Activated B cell treated with CpG ODN at 0.5 μM for 24 hours (primary cell): ENCODE measurements at regions of chr1 and their contacts with region 1.

Region 1: GRCh38 chr1:45583264-45583665 is 576 bp upstream of the NASP start:
- DNase-seq: peak; percentile 84
- ATAC-seq: peak; percentile 79
- H3K4me3 Mint-ChIP-seq: peak overlapping the region; percentile 98
- H3K27ac Mint-ChIP-seq: peak overlapping the region; percentile 96
- H3K4me1 Mint-ChIP-seq: peaks cover 46% of the 10 kb centered on the region
- H3K27me3 Mint-ChIP-seq: no peaks in the 10 kb centered on the region
- CTCF ChIP-seq: no peak

Region 2: GRCh38 chr1:45339789-45340570 is 243.3 kb before region 1 on chr1 and contains the starts of genes MUTYH and TOE1:
- CTCF ChIA-PET with region 1: no interaction called
- POLR2A ChIA-PET with region 1: interaction called, 30 read pairs
- intact Hi-C with region 1: no loop called
- DNase-seq: peak; percentile 85
- ATAC-seq: peak; percentile 86
- H3K4me3 Mint-ChIP-seq: peak within 1 kb of the TSS; percentile 100
- H3K27ac Mint-ChIP-seq: peak within 1 kb of the TSS; percentile 99
- H3K4me1 Mint-ChIP-seq: peaks cover 39% of the 10 kb centered on the region
- H3K27me3 Mint-ChIP-seq: no peaks in the 10 kb centered on the region
- CTCF ChIP-seq: no peak
- total RNA-seq, gene MUTYH: 61.0 and 63.0 TPM in 2 replicates
- total RNA-seq, gene TOE1: 24.6 and 25.3 TPM in 2 replicates

Region 3: DNA sequence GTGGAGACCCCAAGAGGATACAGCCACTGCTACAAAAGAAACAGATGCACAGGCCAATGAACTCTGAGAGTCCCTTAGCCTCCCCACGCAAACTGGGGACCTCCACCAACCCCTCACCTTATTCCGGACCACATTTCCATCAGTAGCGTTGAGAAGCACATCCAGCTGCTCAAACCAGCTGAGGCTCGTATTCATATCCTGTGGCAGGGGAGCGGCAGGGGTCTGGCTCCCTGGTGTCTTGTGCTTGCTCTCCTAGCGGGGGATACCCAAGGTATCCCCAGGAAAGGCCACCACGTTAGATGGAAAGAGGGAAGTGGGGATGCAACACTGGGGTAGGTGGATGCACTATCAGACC is 83.9 kb before region 1 on chr1:
- CTCF ChIA-PET with region 1: no interaction called
- POLR2A ChIA-PET with region 1: interaction called, 30 read pairs
- intact Hi-C with region 1: loop called (anchors 1 kb)
- DNase-seq: no peak
- ATAC-seq: no peak
- H3K4me3 Mint-ChIP-seq: peak overlapping the region; percentile 97
- H3K27ac Mint-ChIP-seq: peak overlapping the region; percentile 88
- H3K4me1 Mint-ChIP-seq: peaks cover 27% of the 10 kb centered on the region
- H3K27me3 Mint-ChIP-seq: no peaks in the 10 kb centered on the region
- CTCF ChIP-seq: no peak

Region 4: GRCh38 chr1:45543581-45544417 is 39.5 kb before region 1 on chr1:
- CTCF ChIA-PET with region 1: no interaction called
- POLR2A ChIA-PET with region 1: interaction called, 55 read pairs
- intact Hi-C with region 1: loop called (anchors 1 kb)
- DNase-seq: peak; percentile 55
- ATAC-seq: peak; percentile 84
- H3K4me3 Mint-ChIP-seq: peak overlapping the region; percentile 76
- H3K27ac Mint-ChIP-seq: peak overlapping the region; percentile 94
- H3K4me1 Mint-ChIP-seq: peaks cover 56% of the 10 kb centered on the region
- H3K27me3 Mint-ChIP-seq: no peaks in the 10 kb centered on the region
- CTCF ChIP-seq: no peak

Region 5: DNA sequence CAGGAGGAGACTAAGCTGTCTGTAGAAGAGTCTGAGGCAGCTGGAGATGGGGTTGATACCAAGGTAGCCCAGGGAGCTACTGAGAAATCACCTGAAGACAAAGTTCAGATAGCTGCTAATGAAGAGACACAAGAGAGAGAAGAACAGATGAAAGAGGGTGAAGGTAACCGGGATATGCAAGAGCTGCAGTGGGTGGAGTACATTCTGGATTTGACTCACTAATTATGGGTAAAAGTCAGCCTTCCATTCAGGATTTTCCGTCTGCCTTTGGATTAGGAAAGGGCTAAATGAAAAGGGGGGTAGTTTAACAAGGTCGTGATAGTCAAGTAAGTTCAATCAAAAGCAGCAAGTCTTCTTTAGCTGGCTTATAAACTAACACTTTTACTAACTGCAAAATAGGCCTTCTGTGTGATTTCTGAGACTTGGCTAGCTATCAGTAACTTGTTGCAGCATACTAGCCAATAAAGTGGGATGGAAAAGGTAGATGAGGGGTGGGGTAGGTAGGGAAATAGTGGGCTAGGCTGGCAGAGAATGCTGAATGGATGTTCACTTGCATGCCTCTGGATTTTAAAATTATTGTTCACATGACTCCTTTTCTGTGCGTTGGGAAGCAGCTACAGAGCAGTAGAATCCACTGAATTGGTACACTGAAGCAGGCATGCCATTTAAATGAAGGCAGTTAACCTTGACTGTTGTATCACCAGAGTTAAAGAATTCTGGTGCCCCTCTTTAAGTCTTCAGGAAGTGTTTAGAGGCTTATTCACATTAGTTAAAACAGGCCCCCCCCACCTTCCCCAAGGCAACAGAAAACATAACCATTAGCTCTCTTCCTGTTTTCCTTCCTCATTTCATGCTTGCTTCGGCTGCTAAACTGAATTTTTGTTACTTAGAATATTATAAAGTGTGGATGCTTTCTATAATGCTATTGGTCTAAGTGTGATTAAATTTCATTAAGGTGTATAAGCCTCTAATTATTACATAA is 25.2 kb after region 1 on chr1:
- CTCF ChIA-PET with region 1: no interaction called
- POLR2A ChIA-PET with region 1: interaction called, 9 read pairs
- intact Hi-C with region 1: loop called (anchors 2 kb)
- DNase-seq: no peak
- ATAC-seq: peak; percentile 69
- H3K4me3 Mint-ChIP-seq: peak overlapping the region; percentile 4
- H3K27ac Mint-ChIP-seq: peak overlapping the region; percentile 72
- H3K4me1 Mint-ChIP-seq: peaks cover 38% of the 10 kb centered on the region
- H3K27me3 Mint-ChIP-seq: no peaks in the 10 kb centered on the region
- CTCF ChIP-seq: no peak